Ascending aorta (tissue), 2 donors: ENCODE measurements at regions of chr1 and their contacts with region 1.

Region 1: GRCh38 chr1:171715813-171716251 is 26.0 kb downstream of the VAMP4 start:
- DNase-seq: no peak
- H3K4me3 ChIP-seq: no peak overlapping the region
- H3K27ac ChIP-seq: peak overlapping the region in 1 of 2 donors; percentile 49
- H3K4me1 ChIP-seq: no peaks in the 10 kb centered on the region
- H3K27me3 ChIP-seq: no peaks in the 10 kb centered on the region
- CTCF ChIP-seq: peak; percentile 34 to 64 (median 51)

Region 2: GRCh38 chr1:171576144-171576543 is 139.7 kb before region 1 on chr1:
- intact Hi-C with region 1: loop called (anchors 10 kb)
- DNase-seq: no peak
- H3K4me3 ChIP-seq: no peak overlapping the region
- H3K27ac ChIP-seq: peak overlapping the region in 1 of 2 donors; percentile 13
- H3K4me1 ChIP-seq: no peaks in the 10 kb centered on the region
- H3K27me3 ChIP-seq: no peaks in the 10 kb centered on the region
- CTCF ChIP-seq: no peak